Right ventricle myocardium inferior (tissue), 1 donor: ENCODE measurements at regions of chr15 and their contacts with region 1.

Region 1: DNA sequence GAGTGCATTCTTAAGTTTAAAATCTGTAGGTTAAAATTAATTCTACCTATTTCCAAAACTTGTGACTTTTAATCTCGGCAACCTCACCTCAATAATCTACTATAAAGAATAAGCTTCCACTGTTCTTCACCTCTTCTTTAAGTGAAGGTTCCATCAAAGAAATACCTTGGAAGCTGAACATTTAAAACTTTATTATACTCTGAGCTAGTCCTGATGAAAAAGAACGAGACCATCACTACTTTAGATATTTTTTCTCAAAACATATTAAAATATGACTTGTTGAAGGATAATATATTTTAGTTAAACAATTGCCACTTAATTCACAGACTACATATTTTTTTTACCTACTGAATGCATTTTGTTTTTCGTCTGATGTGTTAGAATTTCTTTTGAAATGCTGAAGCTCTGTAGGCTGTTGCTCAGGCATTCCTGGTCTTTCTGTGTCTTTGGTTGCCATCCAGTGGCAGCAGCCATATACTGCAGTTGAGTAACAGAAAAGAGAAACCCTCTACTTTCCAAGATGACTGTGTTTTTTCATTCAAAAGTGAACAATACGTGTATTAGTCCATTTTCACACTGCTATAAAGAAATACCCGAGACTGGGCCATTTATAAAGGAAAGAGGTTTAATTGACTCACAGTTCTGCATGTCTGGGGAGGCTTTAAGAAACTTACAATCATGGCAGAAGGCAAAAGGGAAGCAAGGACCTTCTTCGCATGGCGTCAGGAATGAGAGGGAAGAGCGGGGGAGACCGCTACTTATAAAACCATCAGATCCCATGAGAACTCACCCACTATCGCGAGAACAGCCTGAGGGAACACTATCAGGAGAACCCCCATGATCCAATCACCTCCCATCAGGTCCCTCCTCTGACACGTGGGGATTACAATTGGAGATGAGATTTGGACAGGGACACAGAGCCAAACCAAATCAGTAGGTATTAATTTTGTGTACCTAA is 4.5 kb upstream of the GOLGA8B start:
- DNase-seq: no peak
- ATAC-seq: peak; percentile 66

Region 2: GRCh38 chr15:34065941-34066340 is 522.1 kb before region 1 on chr15:
- intact Hi-C with region 1: loop called (anchors 10 kb)
- DNase-seq: no peak
- ATAC-seq: no peak

Region 3: DNA sequence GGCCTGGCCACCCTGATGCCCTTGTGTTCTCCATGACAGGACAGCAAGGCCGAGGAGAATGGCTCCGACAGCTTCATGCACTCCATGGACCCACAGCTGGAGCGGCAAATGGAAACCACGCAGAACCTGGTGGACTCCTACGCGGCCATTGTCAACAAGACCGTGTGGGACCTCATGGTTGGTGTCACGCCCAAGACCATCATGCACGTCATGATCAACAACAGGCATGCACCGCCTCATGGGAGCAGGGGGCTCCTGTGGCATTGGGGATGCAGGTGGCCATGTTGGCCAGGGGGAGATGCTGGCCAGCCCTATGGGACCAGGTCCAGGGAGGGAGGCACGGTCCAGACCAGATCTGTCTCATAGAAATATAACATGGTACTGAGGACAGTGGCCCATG is 67.4 kb before region 1 on chr15:
- intact Hi-C with region 1: loop called (anchors 10 kb)
- DNase-seq: peak; percentile 53
- ATAC-seq: no peak

Region 4: DNA sequence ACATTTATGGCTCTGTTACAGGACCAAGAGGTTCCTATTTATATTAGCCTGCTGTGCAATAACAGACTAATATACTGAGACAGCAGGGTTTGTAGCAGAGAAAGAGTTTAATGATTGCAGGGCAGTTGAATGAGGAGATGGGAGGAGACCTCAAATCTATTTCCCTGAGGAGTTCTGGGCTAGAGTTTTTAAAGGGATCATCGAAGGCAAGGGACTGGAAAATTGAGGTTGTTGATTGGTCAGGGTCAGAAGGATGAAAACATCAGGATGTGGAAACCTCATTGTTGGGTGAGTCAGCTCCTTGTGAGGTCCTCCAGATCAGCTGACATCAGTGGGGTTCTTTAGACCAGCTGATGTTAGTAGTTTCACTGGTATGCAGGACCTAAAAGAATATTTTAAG is 56.1 kb after region 1 on chr15:
- intact Hi-C with region 1: no loop called
- DNase-seq: no peak
- ATAC-seq: no peak

Region 5: GRCh38 chr15:34673241-34673640 is 85.2 kb after region 1 on chr15:
- intact Hi-C with region 1: no loop called
- DNase-seq: no peak
- ATAC-seq: no peak